Caco-2 (cell line): ENCODE measurements at regions of chr6 and their contacts with region 1.

Region 1: DNA sequence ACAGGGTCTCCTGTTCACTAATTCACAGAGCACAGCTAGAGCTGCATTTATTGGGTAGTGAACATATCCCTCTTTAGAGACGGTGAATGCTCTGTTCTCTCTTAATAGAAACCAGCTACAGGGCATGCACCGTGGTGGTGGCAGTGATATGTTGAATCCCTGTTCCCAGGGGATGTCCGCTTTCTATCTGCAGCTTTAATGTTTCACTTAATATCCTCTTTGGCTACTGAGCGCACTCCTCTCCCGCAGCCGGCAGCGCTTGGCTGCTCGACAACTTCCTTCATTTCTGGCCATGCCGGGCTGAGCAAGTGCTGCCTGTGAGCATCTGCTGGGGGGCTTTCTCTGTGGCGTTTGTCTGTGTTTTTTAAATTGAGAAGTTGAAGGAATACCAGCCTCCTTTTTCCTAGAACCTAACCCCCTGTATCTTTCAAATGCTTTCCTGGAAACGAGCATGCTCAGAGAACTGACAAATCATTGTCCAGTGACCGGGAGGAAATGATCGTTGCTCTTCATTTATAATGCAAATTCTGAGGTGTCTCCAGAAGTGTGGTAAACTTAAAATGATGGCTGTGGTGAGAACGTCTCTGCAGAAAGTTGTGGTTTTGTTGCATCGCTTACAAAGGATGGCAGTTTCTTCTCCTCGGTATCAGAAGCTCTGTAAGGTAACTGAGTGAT is 297.9 kb downstream of the UTRN start:
- DNase-seq: no peak
- H3K4me3 ChIP-seq: no peak overlapping the region
- H3K4me3 Mint-ChIP-seq: no peak overlapping the region
- H3K27ac Mint-ChIP-seq: peak overlapping the region; percentile 42
- H3K4me1 ChIP-seq: no peaks in the 10 kb centered on the region
- H3K4me1 Mint-ChIP-seq: peaks cover 16% of the 10 kb centered on the region
- H3K27me3 ChIP-seq: no peaks in the 10 kb centered on the region
- H3K27me3 Mint-ChIP-seq: no peaks in the 10 kb centered on the region
- CTCF ChIP-seq: no peak

Region 2: GRCh38 chr6:144675231-144675861 is 92.3 kb after region 1 on chr6:
- CTCF ChIA-PET with region 1: no interaction called
- POLR2A ChIA-PET with region 1: no interaction called
- intact Hi-C with region 1: no loop called
- DNase-seq: no peak
- H3K4me3 ChIP-seq: no peak overlapping the region
- H3K4me3 Mint-ChIP-seq: no peak overlapping the region
- H3K27ac Mint-ChIP-seq: no peak overlapping the region
- H3K4me1 ChIP-seq: no peaks in the 10 kb centered on the region
- H3K4me1 Mint-ChIP-seq: no peaks in the 10 kb centered on the region
- H3K27me3 ChIP-seq: no peaks in the 10 kb centered on the region
- H3K27me3 Mint-ChIP-seq: no peaks in the 10 kb centered on the region
- CTCF ChIP-seq: no peak

Region 3: GRCh38 chr6:144710237-144710636 is 127.2 kb after region 1 on chr6:
- CTCF ChIA-PET with region 1: no interaction called
- POLR2A ChIA-PET with region 1: no interaction called
- intact Hi-C with region 1: loop called (anchors 5 kb)
- DNase-seq: no peak
- H3K4me3 ChIP-seq: no peak overlapping the region
- H3K4me3 Mint-ChIP-seq: no peak overlapping the region
- H3K27ac Mint-ChIP-seq: no peak overlapping the region
- H3K4me1 ChIP-seq: no peaks in the 10 kb centered on the region
- H3K4me1 Mint-ChIP-seq: no peaks in the 10 kb centered on the region
- H3K27me3 ChIP-seq: no peaks in the 10 kb centered on the region
- H3K27me3 Mint-ChIP-seq: no peaks in the 10 kb centered on the region
- CTCF ChIP-seq: no peak

Region 4: DNA sequence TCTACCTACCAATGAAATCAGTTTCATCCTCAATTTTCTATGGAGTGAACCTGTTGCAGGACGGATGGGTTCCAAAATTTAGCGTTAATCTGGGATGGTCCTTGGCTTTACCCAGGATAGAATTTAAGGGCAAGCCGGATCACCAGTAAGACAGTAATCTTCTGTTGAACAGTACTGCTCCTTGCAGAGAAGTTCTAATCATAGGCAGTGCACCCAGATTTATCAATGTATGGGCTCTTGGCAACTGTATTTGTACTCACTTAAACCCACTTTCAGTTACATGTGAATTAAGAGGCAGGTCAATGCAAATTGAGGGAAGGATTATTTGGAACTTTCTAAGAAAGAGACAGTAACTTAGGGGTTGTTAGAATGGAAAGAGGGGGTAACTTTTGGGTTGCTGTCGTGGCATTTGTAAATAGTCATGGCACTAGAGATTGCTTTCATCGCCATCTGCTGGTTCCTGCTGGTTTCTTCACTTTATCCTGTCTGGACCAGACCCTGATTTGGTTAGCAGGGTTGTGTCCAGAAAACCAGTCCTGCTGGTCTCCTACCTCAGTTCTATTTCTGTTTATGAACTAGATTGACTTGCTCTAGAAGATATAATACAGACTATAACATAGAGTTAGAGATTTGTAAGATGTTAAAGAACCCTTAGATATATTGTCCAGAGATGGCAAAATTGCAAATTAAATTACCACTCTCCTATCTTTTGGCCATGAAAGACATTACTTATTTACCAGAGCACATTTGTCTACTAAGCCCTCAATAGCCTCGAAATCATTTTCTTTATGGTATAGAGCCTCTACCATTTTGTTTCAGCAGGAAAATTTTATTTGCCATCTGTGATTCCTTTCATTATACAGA is 348.3 kb after region 1 on chr6:
- CTCF ChIA-PET with region 1: no interaction called
- POLR2A ChIA-PET with region 1: no interaction called
- intact Hi-C with region 1: loop called (anchors 1 kb)
- DNase-seq: peak; percentile 47 to 50
- H3K4me3 ChIP-seq: no peak overlapping the region
- H3K4me3 Mint-ChIP-seq: no peak overlapping the region
- H3K27ac Mint-ChIP-seq: no peak overlapping the region
- H3K4me1 ChIP-seq: no peaks in the 10 kb centered on the region
- H3K4me1 Mint-ChIP-seq: no peaks in the 10 kb centered on the region
- H3K27me3 ChIP-seq: no peaks in the 10 kb centered on the region
- H3K27me3 Mint-ChIP-seq: peaks cover 4% of the 10 kb centered on the region
- CTCF ChIP-seq: peak; percentile 60 to 61

Region 5: GRCh38 chr6:144993870-144994269 is 410.8 kb after region 1 on chr6:
- CTCF ChIA-PET with region 1: no interaction called
- POLR2A ChIA-PET with region 1: no interaction called
- intact Hi-C with region 1: no loop called
- DNase-seq: no peak
- H3K4me3 ChIP-seq: no peak overlapping the region
- H3K4me3 Mint-ChIP-seq: no peak overlapping the region
- H3K27ac Mint-ChIP-seq: no peak overlapping the region
- H3K4me1 ChIP-seq: no peaks in the 10 kb centered on the region; the same call in 1 of the 2 replicates
- H3K4me1 Mint-ChIP-seq: peaks cover 10% of the 10 kb centered on the region
- H3K27me3 ChIP-seq: no peaks in the 10 kb centered on the region
- H3K27me3 Mint-ChIP-seq: peaks cover 13% of the 10 kb centered on the region
- CTCF ChIP-seq: no peak

Region 6: GRCh38 chr6:145214570-145214969 is 631.5 kb after region 1 on chr6:
- CTCF ChIA-PET with region 1: no interaction called
- POLR2A ChIA-PET with region 1: no interaction called
- intact Hi-C with region 1: loop called (anchors 5 kb)
- DNase-seq: peak in 1 of 2 experiments; percentile 29
- H3K4me3 ChIP-seq: no peak overlapping the region
- H3K4me3 Mint-ChIP-seq: no peak overlapping the region
- H3K27ac Mint-ChIP-seq: no peak overlapping the region
- H3K4me1 ChIP-seq: no peaks in the 10 kb centered on the region
- H3K4me1 Mint-ChIP-seq: no peaks in the 10 kb centered on the region
- H3K27me3 ChIP-seq: no peaks in the 10 kb centered on the region
- H3K27me3 Mint-ChIP-seq: no peaks in the 10 kb centered on the region
- CTCF ChIP-seq: peak; percentile 46 to 52

Region 7: DNA sequence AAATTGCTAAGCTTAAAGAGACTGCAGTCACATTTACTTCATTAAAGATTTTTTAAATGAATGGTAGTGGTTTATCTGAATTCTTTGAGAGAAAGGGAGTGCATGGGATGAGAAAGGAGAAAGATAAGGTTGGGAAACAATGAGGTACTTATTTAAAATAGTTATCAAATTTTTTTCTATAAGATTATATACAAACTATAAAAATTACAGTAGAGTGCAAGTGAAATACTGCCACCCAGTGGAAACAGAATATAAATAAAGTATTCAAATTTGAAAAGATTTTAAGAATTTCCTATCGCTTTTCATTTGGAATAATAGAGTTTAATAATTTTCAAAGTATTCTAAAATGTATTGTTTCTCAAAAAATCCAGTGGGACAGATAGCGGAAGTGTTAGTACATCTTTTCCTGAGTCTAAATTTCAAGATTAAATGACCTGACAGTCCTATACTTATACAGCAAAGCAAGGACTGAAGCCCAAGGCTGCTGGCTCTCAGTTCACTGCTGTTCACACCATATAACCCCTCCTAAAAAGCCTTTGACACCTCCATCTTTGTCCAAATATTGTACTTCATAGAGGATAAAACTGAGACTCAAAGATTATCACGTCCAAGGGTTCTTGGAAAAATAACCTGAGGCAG is 1121.2 kb after region 1 on chr6:
- CTCF ChIA-PET with region 1: no interaction called
- POLR2A ChIA-PET with region 1: no interaction called
- intact Hi-C with region 1: loop called (anchors 5 kb)
- DNase-seq: no peak
- H3K4me3 ChIP-seq: no peak overlapping the region
- H3K4me3 Mint-ChIP-seq: no peak overlapping the region
- H3K27ac Mint-ChIP-seq: no peak overlapping the region
- H3K4me1 ChIP-seq: no peaks in the 10 kb centered on the region
- H3K4me1 Mint-ChIP-seq: no peaks in the 10 kb centered on the region
- H3K27me3 ChIP-seq: no peaks in the 10 kb centered on the region
- H3K27me3 Mint-ChIP-seq: no peaks in the 10 kb centered on the region
- CTCF ChIP-seq: peak; percentile 20 to 58